ENCODE measurements at regions of chr14 and their contacts with region 1.

Region 1: DNA sequence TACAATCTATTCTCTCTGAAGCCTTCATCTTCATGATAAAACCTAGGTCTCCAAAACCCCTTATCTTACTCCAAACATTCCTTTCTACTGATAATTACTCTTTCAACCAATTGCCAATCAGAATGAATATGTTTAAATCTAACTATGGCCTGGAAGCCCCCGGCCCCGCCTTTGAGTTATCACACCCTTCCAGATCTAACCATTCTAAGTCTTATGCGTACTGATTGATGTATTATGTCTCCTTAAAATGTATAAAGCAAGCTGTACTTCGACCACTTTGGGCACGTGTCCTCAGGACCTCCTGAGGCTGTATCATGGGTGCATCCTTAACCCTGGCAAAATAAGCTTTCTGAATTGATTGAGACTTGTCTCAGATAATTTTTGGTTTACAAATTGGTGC is 14.4 kb downstream of the PABPN1 start:
- ATAC-seq: no peak
- H3K4me3 ChIP-seq: no peak overlapping the region
- H3K27ac ChIP-seq: no peak overlapping the region
- H3K4me1 ChIP-seq: no peaks in the 10 kb centered on the region

Region 2: DNA sequence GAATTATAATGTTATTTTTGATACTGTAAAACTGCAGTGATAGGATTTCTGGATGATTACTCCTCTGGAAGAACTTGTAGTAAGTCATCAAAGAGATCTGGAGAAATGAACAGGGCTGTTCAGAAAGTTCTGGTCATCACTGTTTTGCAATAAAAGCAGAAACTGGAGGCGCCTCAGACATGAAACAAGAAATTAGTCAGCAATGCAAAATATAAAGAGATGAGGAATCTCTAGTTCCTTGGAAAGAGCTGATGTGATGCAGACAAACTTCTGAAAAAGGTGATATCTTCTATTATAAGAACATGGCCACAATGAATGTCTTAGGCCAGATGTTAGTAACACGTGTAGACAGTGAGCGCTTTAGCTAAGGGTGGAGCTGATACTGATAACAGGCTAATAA is 250.2 kb before region 1 on chr14:
- in situ Hi-C with region 1: no loop called
- ATAC-seq: peak in 1 of 8 experiments; percentile 46
- H3K4me3 ChIP-seq: no peak overlapping the region
- H3K27ac ChIP-seq: no peak overlapping the region
- H3K4me1 ChIP-seq: no peaks in the 10 kb centered on the region

Region 3: DNA sequence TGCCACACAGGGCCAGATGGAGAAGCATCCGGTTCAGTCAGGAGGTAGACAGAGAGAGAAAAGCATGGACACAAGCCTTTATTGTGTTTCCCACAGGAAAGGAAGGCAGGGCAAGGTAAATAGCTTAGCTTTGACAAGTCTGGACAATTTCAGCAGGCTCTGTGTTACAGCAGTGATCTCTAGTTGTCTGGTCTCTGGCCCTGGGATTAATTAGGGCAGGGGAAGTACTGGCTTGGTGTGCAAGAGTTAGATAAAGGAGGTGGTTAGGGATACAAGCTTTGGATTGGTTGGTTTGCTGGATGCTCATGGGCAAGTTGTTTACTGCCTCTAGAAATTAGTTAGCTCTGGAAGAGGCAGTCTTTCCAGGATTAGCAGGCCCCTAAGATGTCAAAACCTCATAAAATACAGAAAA is 118.8 kb after region 1 on chr14:
- in situ Hi-C with region 1: loop called in 3 of 9 experiments (anchors 10 to 25 kb)
- ATAC-seq: peak in 1 of 8 experiments; percentile 41
- H3K4me3 ChIP-seq: no peak overlapping the region
- H3K27ac ChIP-seq: no peak overlapping the region
- H3K4me1 ChIP-seq: no peaks in the 10 kb centered on the region

Measured in motor neuron (in vitro differentiated cells).